IMR-90 (cell line): ENCODE measurements at regions of chr13 and their contacts with region 1.

Region 1: DNA sequence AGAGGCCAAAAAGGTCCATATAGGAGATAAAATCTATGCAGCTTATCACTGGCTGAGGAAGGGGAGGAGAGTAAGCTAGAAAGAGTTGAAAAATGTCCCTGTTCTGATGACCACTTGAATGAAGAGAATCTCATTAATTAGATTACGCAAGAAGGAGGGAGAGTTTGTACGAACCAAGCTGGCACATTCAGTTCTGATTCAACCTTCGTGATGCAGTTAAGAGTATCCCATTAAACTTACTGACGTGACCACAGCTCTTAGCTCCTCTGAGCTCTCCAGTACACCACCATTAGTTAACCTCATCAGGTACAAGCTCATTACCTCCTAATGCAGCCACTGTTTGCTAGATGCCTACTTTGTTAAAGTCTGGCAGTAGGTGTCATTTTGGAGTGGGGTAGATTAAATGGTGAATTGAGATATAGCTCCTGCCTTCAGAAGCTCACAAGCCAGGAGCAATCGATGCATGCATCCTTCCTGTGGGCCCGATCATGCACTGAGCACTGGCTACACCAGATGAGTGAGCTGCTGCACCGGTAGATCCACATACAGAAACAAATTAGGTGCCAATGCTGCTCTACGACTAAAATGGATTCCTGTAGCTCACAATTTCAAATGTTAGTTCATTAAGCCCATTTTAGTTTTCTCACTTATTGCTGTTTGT is 458.3 kb downstream of the COG6 start:
- DNase-seq: no peak
- ATAC-seq: no peak
- H3K4me3 ChIP-seq: no peak overlapping the region
- H3K27ac ChIP-seq: no peak overlapping the region
- H3K4me1 ChIP-seq: no peaks in the 10 kb centered on the region
- H3K27me3 ChIP-seq: no peaks in the 10 kb centered on the region
- CTCF ChIP-seq: no peak
- POLR2A ChIP-seq: no peak
- RAD21 ChIP-seq: no peak

Region 2: GRCh38 chr13:40101708-40102359 is 11.9 kb before region 1 on chr13:
- CTCF ChIA-PET with region 1: no interaction called
- POLR2A ChIA-PET with region 1: no interaction called
- dilution Hi-C with region 1: no loop called
- in situ Hi-C with region 1: no loop called
- intact Hi-C with region 1: loop called (anchors 1 kb)
- DNase-seq: no peak
- ATAC-seq: no peak
- H3K4me3 ChIP-seq: no peak overlapping the region
- H3K27ac ChIP-seq: no peak overlapping the region
- H3K4me1 ChIP-seq: no peaks in the 10 kb centered on the region
- H3K27me3 ChIP-seq: no peaks in the 10 kb centered on the region
- CTCF ChIP-seq: no peak
- POLR2A ChIP-seq: no peak
- RAD21 ChIP-seq: no peak